Gastrocnemius medialis (tissue), 4 donors: ENCODE measurements at regions of chr6 and their contacts with region 1.

Region 1: GRCh38 chr6:12605888-12606345 is 110.7 kb upstream of the PHACTR1 start:
- DNase-seq: peak in 1 of 2 donors; percentile 15
- ATAC-seq: peak in 1 of 2 donors; percentile 69
- H3K4me3 ChIP-seq: no peak overlapping the region
- H3K27ac ChIP-seq: no peak overlapping the region
- H3K4me1 ChIP-seq: no peaks in the 10 kb centered on the region
- H3K27me3 ChIP-seq: no peaks in the 10 kb centered on the region
- CTCF ChIP-seq: peak in 4 of 5 experiments; percentile 6 to 62 (median 50)
- POLR2A ChIP-seq: no peak

Region 2: GRCh38 chr6:11585426-11586016 is 1020.4 kb before region 1 on chr6:
- in situ Hi-C with region 1: no loop called
- intact Hi-C with region 1: loop called (anchors 10 kb)
- DNase-seq: no peak
- ATAC-seq: no peak
- H3K4me3 ChIP-seq: no peak overlapping the region
- H3K27ac ChIP-seq: no peak overlapping the region
- H3K4me1 ChIP-seq: peaks cover 0 to 8% of the 10 kb centered on the region in 2 donors
- H3K27me3 ChIP-seq: no peaks in the 10 kb centered on the region
- CTCF ChIP-seq: peak in 4 of 5 experiments; percentile 32 to 50 (median 42)
- POLR2A ChIP-seq: no peak

Region 3: GRCh38 chr6:12233693-12234571 is 372.0 kb before region 1 on chr6:
- in situ Hi-C with region 1: no loop called
- intact Hi-C with region 1: loop called (anchors 5 kb)
- DNase-seq: peak in 1 of 2 donors; percentile 2
- ATAC-seq: peak; percentile 56 to 73
- H3K4me3 ChIP-seq: no peak overlapping the region
- H3K27ac ChIP-seq: no peak overlapping the region
- H3K4me1 ChIP-seq: no peaks in the 10 kb centered on the region
- H3K27me3 ChIP-seq: no peaks in the 10 kb centered on the region
- CTCF ChIP-seq: peak; percentile 40 to 64 (median 52)
- POLR2A ChIP-seq: no peak

Region 4: GRCh38 chr6:12289933-12290820 is 315.7 kb before region 1 on chr6 and contains the start of gene EDN1:
- in situ Hi-C with region 1: no loop called
- intact Hi-C with region 1: loop called (anchors 10 kb)
- DNase-seq: peak; percentile 25 to 26
- ATAC-seq: peak; percentile 62 to 72
- H3K4me3 ChIP-seq: peak within 1 kb of the TSS; percentile 46 to 61 (median 56)
- H3K27ac ChIP-seq: peak within 1 kb of the TSS in 3 of 4 donors; percentile 55 to 73 (median 57)
- H3K4me1 ChIP-seq: peaks cover 3 to 7% of the 10 kb centered on the region in 2 donors
- H3K27me3 ChIP-seq: peaks cover 7 to 14% (median 12%) of the 10 kb centered on the region in 3 donors
- CTCF ChIP-seq: peak in 2 of 5 experiments; percentile 28 to 58
- POLR2A ChIP-seq: peak; percentile 37 to 48
- total RNA-seq, gene EDN1: 7.4 to 12.0 (median 9.3) TPM

Region 5: GRCh38 chr6:12313992-12314805 is 291.7 kb before region 1 on chr6:
- in situ Hi-C with region 1: loop called in 1 of 4 experiments (anchors 25 kb)
- intact Hi-C with region 1: no loop called
- DNase-seq: no peak
- ATAC-seq: no peak
- H3K4me3 ChIP-seq: no peak overlapping the region
- H3K27ac ChIP-seq: no peak overlapping the region
- H3K4me1 ChIP-seq: no peaks in the 10 kb centered on the region
- H3K27me3 ChIP-seq: no peaks in the 10 kb centered on the region
- CTCF ChIP-seq: no peak
- POLR2A ChIP-seq: no peak

Region 6: DNA sequence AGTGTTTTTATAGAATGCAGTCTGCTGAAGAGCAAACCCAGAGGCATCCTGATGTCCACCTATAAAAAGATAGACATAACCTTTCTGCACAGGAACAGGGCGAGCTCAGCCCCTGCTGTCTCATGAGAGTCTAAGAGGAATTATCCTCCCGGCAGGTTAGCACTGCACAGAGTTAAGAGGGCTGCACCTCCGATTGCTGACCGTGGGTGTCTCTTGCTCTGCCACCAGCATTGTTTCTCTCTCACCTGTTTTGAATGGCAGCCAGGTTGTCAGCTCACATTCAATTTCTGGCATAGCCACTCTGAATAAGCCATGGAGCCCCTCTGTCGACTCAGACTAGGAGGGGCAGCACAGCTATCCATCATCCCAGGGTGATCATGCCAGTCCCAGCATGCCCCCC is 321.8 kb after region 1 on chr6:
- in situ Hi-C with region 1: no loop called
- intact Hi-C with region 1: no loop called
- DNase-seq: no peak
- ATAC-seq: no peak
- H3K4me3 ChIP-seq: no peak overlapping the region
- H3K27ac ChIP-seq: no peak overlapping the region
- H3K4me1 ChIP-seq: no peaks in the 10 kb centered on the region
- H3K27me3 ChIP-seq: no peaks in the 10 kb centered on the region
- CTCF ChIP-seq: no peak
- POLR2A ChIP-seq: no peak